Activated CD4-positive, alpha-beta T cell treated with anti-CD3 and anti-CD28 coated beads for 36 hours (primary cell): ENCODE measurements at regions of chr1 and their contacts with region 1.

Region 1: GRCh38 chr1:239898062-239898730 is 193.5 kb upstream of the FMN2 start:
- DNase-seq: peak; percentile 86
- ATAC-seq: peak; percentile 98
- H3K4me3 Mint-ChIP-seq: no peak overlapping the region
- H3K27ac Mint-ChIP-seq: no peak overlapping the region
- H3K4me1 Mint-ChIP-seq: peaks cover 2% of the 10 kb centered on the region
- H3K27me3 Mint-ChIP-seq: peaks cover 4% of the 10 kb centered on the region

Region 2: GRCh38 chr1:239308701-239309333 is 589.4 kb before region 1 on chr1:
- CTCF ChIA-PET with region 1: interaction called, 6 read pairs
- POLR2A ChIA-PET with region 1: no interaction called
- intact Hi-C with region 1: loop called (anchors 1 to 2 kb)
- DNase-seq: peak; percentile 66
- ATAC-seq: peak; percentile 81
- H3K4me3 Mint-ChIP-seq: no peak overlapping the region
- H3K27ac Mint-ChIP-seq: no peak overlapping the region
- H3K4me1 Mint-ChIP-seq: no peaks in the 10 kb centered on the region
- H3K27me3 Mint-ChIP-seq: no peaks in the 10 kb centered on the region

Region 3: DNA sequence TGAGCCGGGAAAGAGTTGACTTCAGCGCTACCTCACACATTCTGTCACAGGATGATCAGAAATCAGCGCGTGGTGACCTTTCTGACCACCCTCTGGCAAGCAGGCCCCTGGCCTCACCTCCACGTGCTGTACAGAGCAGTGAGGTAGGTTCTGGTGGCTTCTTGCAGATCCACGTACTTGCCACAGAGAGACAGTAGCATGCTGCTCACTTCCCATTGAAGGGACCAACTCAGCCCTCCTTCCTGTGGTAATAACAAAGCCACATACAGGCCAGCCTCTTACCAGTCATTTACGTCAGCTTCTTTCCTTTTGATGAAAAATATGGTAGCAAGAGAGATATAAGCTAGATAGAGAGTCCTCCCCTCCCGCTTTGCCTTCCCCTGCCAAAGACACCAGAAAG is 311.1 kb before region 1 on chr1:
- CTCF ChIA-PET with region 1: interaction called, 7 read pairs
- POLR2A ChIA-PET with region 1: no interaction called
- intact Hi-C with region 1: loop called in 1 of 2 experiments (anchors 5 kb)
- DNase-seq: peak; percentile 39
- ATAC-seq: peak; percentile 97
- H3K4me3 Mint-ChIP-seq: no peak overlapping the region
- H3K27ac Mint-ChIP-seq: no peak overlapping the region
- H3K4me1 Mint-ChIP-seq: peaks cover 9% of the 10 kb centered on the region
- H3K27me3 Mint-ChIP-seq: no peaks in the 10 kb centered on the region

Region 4: GRCh38 chr1:239792157-239792556 is 106.0 kb before region 1 on chr1:
- CTCF ChIA-PET with region 1: interaction called, 5 read pairs
- POLR2A ChIA-PET with region 1: no interaction called
- intact Hi-C with region 1: loop called (anchors 1 kb)
- DNase-seq: peak; percentile 51
- ATAC-seq: peak; percentile 99
- H3K4me3 Mint-ChIP-seq: no peak overlapping the region
- H3K27ac Mint-ChIP-seq: peak overlapping the region; percentile 22
- H3K4me1 Mint-ChIP-seq: peaks cover 20% of the 10 kb centered on the region
- H3K27me3 Mint-ChIP-seq: no peaks in the 10 kb centered on the region

Region 5: GRCh38 chr1:239886266-239886665 is 11.9 kb before region 1 on chr1:
- CTCF ChIA-PET with region 1: interaction called, 16 read pairs
- POLR2A ChIA-PET with region 1: no interaction called
- intact Hi-C with region 1: no loop called
- DNase-seq: no peak
- ATAC-seq: no peak
- H3K4me3 Mint-ChIP-seq: no peak overlapping the region
- H3K27ac Mint-ChIP-seq: no peak overlapping the region
- H3K4me1 Mint-ChIP-seq: no peaks in the 10 kb centered on the region
- H3K27me3 Mint-ChIP-seq: no peaks in the 10 kb centered on the region

Region 6: DNA sequence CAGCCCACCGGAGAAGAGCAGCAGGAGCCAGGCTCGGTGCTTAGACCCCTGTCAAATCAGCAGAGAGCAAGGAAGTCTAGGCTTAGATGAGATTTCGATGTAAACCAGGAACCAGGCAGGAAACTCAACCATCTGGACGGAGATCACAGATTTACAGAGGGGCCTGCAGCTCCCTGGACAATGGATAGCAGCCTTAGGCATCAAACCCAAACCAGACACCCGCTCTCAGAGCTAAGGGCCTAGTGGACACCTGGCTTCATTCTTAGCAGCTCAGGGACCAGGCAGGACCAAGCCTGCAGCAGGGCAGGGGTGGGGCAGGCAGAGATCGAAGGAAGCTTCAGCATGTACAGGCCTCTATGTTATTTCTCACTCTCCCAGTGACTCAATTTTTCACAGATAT is 65.7 kb after region 1 on chr1:
- CTCF ChIA-PET with region 1: no interaction called
- POLR2A ChIA-PET with region 1: no interaction called
- intact Hi-C with region 1: no loop called
- DNase-seq: no peak
- ATAC-seq: no peak
- H3K4me3 Mint-ChIP-seq: no peak overlapping the region
- H3K27ac Mint-ChIP-seq: no peak overlapping the region
- H3K4me1 Mint-ChIP-seq: no peaks in the 10 kb centered on the region
- H3K27me3 Mint-ChIP-seq: peaks cover 3% of the 10 kb centered on the region

Region 7: GRCh38 chr1:240004086-240004749 is 106.0 kb after region 1 on chr1:
- CTCF ChIA-PET with region 1: no interaction called
- POLR2A ChIA-PET with region 1: no interaction called
- intact Hi-C with region 1: no loop called
- DNase-seq: peak; percentile 35
- ATAC-seq: no peak
- H3K4me3 Mint-ChIP-seq: no peak overlapping the region
- H3K27ac Mint-ChIP-seq: no peak overlapping the region
- H3K4me1 Mint-ChIP-seq: no peaks in the 10 kb centered on the region
- H3K27me3 Mint-ChIP-seq: peaks cover 15% of the 10 kb centered on the region

Region 8: GRCh38 chr1:240073097-240073496 is 174.9 kb after region 1 on chr1:
- CTCF ChIA-PET with region 1: no interaction called
- POLR2A ChIA-PET with region 1: no interaction called
- intact Hi-C with region 1: no loop called
- DNase-seq: no peak
- ATAC-seq: no peak
- H3K4me3 Mint-ChIP-seq: no peak overlapping the region
- H3K27ac Mint-ChIP-seq: no peak overlapping the region
- H3K4me1 Mint-ChIP-seq: no peaks in the 10 kb centered on the region
- H3K27me3 Mint-ChIP-seq: peaks cover 2% of the 10 kb centered on the region